Activated B cell treated with CpG ODN at 0.5 μM for 24 hours (primary cell): ENCODE measurements at regions of chr19 and their contacts with region 1.

Region 1: DNA sequence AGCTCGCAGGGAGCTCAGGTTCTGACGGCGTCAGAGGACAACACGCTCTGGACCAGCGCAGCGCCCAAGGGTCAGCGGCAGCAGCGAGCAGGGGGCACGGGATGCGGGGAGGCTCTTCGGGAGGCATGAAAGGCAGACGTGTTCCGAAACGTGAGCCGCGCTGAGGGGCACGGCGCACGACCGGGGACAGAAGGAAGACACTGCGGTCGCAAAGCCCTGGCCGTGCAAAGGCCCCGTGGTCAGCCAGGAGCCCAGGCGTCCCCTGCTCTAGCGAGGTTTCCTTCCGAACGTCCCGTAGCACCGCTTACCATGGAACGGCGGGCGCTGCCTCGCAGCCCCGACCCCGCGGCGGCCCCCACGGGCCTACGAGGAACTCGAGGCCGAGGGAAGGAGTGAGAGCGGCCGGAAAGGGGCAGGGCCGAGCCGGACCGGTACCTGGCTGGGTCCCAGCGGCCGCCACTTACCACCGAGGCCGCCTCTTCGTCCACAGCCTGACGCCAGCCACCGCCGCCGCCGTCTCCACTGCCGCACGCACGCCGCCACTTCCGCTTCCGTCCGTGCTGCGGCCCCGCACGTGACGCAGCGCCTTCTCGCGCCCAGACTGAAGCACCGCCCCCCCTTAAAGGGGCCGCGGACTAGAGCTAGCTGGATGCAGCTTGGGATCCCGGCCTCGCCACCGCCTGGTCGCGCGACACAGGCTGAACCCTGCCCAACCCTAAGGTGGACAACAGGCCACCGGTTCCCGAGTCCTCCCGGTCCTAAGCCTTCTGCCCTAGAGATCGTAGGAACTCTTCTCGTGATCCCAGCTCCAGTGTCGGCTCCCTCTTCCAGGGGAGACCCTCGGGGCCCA is 9.4 kb downstream of the ABHD17A start:
- DNase-seq: peak; percentile 86
- ATAC-seq: peak; percentile 94
- H3K4me3 Mint-ChIP-seq: peak overlapping the region; percentile 97
- H3K27ac Mint-ChIP-seq: peak overlapping the region; percentile 92
- H3K4me1 Mint-ChIP-seq: peaks cover 34% of the 10 kb centered on the region
- H3K27me3 Mint-ChIP-seq: no peaks in the 10 kb centered on the region
- CTCF ChIP-seq: no peak

Region 2: DNA sequence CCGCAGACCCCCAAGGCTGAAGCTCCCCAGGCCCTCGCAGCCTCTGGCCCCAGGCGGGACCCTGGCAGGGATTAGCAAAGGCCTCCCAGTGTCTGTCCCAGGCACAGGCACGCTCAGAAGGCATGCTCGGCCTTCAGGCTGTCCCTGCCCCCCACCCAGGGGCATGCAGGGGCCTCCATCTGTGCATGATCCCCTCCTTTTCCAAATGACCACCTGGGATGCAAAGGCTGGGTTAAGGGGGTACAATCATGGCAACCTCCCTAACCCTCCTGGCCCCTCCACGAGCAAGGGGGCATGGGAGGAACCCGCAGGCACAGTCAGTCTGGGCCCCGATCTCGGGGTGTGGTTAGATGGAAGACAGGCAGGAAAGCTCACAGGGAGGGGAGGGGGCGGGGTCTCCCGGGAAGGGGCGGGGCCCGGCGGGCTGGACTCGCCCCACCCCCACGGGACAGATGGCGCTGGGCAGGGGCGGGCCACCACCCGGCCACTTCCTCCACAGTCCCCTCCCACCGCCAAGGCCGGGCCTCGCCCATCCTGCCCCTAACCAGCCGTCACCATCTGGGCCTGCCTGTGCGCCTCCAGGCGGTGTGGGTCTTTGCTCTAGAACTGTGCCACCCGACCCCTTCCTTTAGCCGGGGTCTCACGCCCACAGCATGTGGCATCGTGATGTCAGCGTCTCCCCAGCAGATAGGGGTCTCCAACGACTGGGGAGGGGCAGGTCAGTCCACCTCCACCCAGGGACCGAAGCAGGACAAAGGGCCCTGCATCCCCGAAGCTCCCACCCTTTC is 20.6 kb before region 1 on chr19:
- CTCF ChIA-PET with region 1: no interaction called
- POLR2A ChIA-PET with region 1: interaction called, 15 read pairs
- intact Hi-C with region 1: no loop called
- DNase-seq: peak; percentile 62
- ATAC-seq: peak; percentile 70
- H3K4me3 Mint-ChIP-seq: peak overlapping the region; percentile 73
- H3K27ac Mint-ChIP-seq: peak overlapping the region; percentile 89
- H3K4me1 Mint-ChIP-seq: peaks cover 73% of the 10 kb centered on the region
- H3K27me3 Mint-ChIP-seq: no peaks in the 10 kb centered on the region
- CTCF ChIP-seq: no peak

Region 3: DNA sequence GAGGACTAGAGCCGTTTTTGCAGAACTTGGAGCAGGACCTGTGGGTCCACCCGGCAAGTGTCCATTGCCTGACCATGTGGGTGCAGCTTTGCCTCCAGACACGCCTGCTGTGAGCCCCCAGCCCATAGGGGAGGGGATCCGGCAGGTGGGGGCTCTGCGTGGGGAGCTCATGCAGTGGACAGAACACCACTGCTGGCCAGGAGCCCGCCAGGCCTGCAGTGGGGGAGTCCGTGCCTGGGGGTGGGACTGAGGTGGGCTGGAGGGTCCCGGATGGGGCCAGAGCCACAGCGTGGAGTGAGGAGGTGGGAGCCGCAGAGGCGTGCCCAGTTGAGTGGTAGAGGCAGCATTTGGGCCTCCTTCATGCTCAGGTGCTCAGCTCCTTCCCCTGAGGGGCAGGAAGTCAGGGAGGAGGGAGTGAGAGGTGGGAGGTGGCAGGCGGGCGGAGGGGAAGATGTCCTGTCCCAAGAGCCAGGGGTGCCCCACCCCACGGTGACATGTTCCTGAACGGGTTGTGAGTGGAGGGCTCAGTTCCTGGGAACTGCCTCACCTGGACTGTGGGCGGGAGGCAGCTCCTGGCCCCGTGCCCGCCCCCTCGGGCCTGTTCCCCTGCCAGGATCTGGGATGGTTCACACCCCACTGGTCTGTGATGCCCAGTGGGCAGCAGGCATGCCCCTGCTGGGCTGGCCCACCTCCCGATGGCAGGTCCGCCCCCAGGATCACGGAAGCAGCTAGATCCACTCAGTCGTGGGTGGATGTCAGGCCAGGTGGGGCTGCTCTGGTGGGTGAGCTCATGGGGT is 38.1 kb after region 1 on chr19:
- CTCF ChIA-PET with region 1: no interaction called
- POLR2A ChIA-PET with region 1: no interaction called
- intact Hi-C with region 1: no loop called
- DNase-seq: no peak
- ATAC-seq: no peak
- H3K4me3 Mint-ChIP-seq: no peak overlapping the region
- H3K27ac Mint-ChIP-seq: no peak overlapping the region
- H3K4me1 Mint-ChIP-seq: peaks cover 19% of the 10 kb centered on the region
- H3K27me3 Mint-ChIP-seq: no peaks in the 10 kb centered on the region
- CTCF ChIP-seq: no peak

Region 4: GRCh38 chr19:2213799-2214198 is 337.9 kb after region 1 on chr19:
- CTCF ChIA-PET with region 1: no interaction called
- POLR2A ChIA-PET with region 1: no interaction called
- intact Hi-C with region 1: no loop called
- DNase-seq: no peak
- ATAC-seq: no peak
- H3K4me3 Mint-ChIP-seq: no peak overlapping the region
- H3K27ac Mint-ChIP-seq: no peak overlapping the region
- H3K4me1 Mint-ChIP-seq: peaks cover 5% of the 10 kb centered on the region
- H3K27me3 Mint-ChIP-seq: no peaks in the 10 kb centered on the region
- CTCF ChIP-seq: no peak